SK-N-SH (cell line): ENCODE measurements at regions of chr9 and their contacts with region 1.

Region 1: GRCh38 chr9:76289042-76289441 is 105.2 kb downstream of the RFK start:
- DNase-seq: no peak
- H3K4me3 ChIP-seq: no peak overlapping the region
- H3K27ac ChIP-seq: no peak overlapping the region
- H3K4me1 ChIP-seq: no peaks in the 10 kb centered on the region
- H3K27me3 ChIP-seq: peaks cover 27% of the 10 kb centered on the region; the same call in 1 of the 2 replicates
- CTCF ChIP-seq: no peak
- EP300 ChIP-seq: no peak
- RAD21 ChIP-seq: no peak

Region 2: DNA sequence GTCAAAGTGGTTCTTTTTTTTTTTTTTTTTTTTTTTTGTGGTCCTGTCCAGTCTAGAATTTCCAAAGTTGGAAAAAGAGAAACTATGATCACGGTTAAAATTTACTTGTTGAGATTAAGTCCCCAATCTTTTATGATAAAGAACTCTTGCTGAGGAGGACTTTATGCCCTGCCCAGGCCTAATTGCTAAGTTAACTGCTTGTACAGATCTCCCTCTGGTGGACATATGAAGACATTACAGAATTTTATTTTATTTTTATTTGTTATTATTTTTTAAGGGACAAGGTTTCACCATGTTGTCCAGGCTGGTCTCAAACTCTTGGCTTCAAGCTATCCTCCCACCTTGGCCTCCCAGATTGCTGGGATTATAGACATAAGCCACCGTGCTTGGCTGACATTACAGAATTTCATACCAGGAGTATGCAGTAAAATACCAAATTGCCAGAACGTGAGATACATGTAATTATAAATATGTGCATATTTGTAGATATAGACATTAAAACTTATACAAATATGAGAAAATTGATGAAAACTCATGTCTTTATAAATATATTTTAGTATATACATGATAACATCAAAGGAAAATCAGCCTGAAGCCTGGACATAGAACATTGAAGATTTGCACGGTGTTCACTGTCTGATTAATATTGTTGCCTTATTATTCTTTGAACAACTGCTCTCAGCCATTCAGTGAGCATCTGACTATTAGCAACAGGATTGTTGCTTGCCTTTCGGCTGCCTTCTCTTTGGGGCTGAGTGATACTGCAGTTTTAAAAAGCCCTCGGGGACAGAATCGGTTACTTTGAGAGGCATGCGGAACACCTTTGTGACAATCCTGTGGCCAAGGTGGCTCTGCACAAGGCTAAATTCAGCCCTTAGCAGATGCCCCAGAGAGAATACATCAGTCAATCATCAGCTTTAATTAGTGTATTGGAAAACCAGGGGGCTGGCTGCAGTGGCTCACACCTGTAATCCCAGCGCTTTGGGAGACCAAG is 14.2 kb after region 1 on chr9:
- CTCF ChIA-PET with region 1: interaction called, 12 read pairs
- POLR2A ChIA-PET with region 1: no interaction called
- DNase-seq: peak; percentile 47
- H3K4me3 ChIP-seq: no peak overlapping the region
- H3K27ac ChIP-seq: no peak overlapping the region
- H3K4me1 ChIP-seq: no peaks in the 10 kb centered on the region
- H3K27me3 ChIP-seq: peaks cover 39% of the 10 kb centered on the region; the same call in 1 of the 2 replicates
- CTCF ChIP-seq: peak; percentile 70
- EP300 ChIP-seq: no peak
- RAD21 ChIP-seq: peak; percentile 78

Region 3: DNA sequence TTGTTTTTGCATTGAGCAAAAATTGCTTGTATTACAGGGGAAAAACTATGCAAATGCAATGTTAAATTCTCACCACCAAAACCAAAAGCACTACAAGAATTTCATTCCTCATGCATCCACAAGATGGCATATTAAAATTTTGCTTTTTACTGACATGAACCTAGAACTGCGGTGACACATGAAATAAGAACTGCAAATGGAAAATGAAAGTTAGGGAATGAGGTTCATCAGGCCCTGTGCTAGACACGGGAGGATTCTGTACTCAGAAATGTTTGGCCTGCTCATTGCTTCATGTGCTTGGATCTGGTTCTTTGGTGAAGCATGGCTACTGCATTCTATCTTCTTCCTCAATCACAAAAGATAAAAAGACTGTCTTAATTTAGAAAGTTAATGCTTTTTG is 114.3 kb after region 1 on chr9:
- CTCF ChIA-PET with region 1: no interaction called
- POLR2A ChIA-PET with region 1: no interaction called
- DNase-seq: peak; percentile 8
- H3K4me3 ChIP-seq: no peak overlapping the region
- H3K27ac ChIP-seq: peak overlapping the region in 1 of 2 experiments; percentile 18; a peak in 3 of 4 replicates
- H3K4me1 ChIP-seq: peaks cover 0 to 4% of the 10 kb centered on the region in 2 experiments; a peak in 1 of 4 replicates
- H3K27me3 ChIP-seq: no peaks in the 10 kb centered on the region
- CTCF ChIP-seq: peak; percentile 72
- EP300 ChIP-seq: no peak
- RAD21 ChIP-seq: peak; percentile 45